HEK293 (cell line): ENCODE measurements at regions of chr3 and their contacts with region 1.

Region 1: DNA sequence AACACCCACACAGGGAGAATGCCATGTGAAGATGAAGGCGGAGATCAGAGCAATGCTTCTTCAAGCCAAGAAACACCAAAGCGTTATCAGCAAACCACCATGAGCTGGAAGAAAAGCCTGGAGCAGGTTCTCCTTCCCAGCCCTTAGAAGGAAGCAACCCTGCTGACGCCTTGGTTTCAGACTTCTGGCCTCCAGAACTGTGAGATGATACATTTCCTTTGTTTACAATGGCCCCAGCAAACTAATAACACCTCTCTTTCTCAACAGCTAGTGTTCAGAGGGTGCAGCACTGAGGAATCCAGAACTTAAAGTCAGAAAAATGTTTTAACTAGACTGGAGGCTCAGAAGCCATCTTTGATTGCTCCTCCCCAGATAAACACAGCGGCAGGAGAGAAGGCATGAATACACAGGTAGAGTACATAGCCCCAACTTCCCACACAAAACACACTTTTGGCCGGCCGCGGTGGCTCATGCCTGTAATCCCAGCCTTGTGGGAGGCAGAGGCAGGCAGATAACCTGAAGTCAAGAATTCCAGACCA is 132.4 kb upstream of the LPP start:
- H3K4me3 ChIP-seq: no peak overlapping the region
- H3K27ac ChIP-seq: no peak overlapping the region
- H3K4me1 ChIP-seq: no peaks in the 10 kb centered on the region
- CTCF ChIP-seq: no peak

Region 2: GRCh38 chr3:188480011-188480410 is 458.4 kb after region 1 on chr3:
- CTCF ChIA-PET with region 1: no interaction called
- POLR2A ChIA-PET with region 1: interaction called, 15 read pairs
- H3K4me3 ChIP-seq: no peak overlapping the region
- H3K27ac ChIP-seq: no peak overlapping the region
- H3K4me1 ChIP-seq: no peaks in the 10 kb centered on the region
- CTCF ChIP-seq: no peak